Common myeloid progenitor, CD34-positive (primary cell): ENCODE measurements at regions of chr1 and their contacts with region 1.

Region 1: GRCh38 chr1:229130028-229130668 is 140.8 kb upstream of the RAB4A start:
- DNase-seq: peak; percentile 29 to 80 (median 76)
- H3K4me3 ChIP-seq: peak overlapping the region in 1 of 7 experiments; percentile 0
- H3K27ac ChIP-seq: no peak overlapping the region
- H3K4me1 ChIP-seq: peaks cover 8 to 34% (median 26%) of the 10 kb centered on the region in 4 experiments
- H3K27me3 ChIP-seq: no peaks in the 10 kb centered on the region

Region 2: GRCh38 chr1:229024528-229025130 is 105.5 kb before region 1 on chr1:
- CTCF ChIA-PET with region 1: no interaction called
- POLR2A ChIA-PET with region 1: no interaction called
- DNase-seq: peak; percentile 54 to 81 (median 80)
- H3K4me3 ChIP-seq: no peak overlapping the region
- H3K27ac ChIP-seq: no peak overlapping the region
- H3K4me1 ChIP-seq: peaks cover 13 to 66% (median 59%) of the 10 kb centered on the region in 4 experiments
- H3K27me3 ChIP-seq: no peaks in the 10 kb centered on the region

Region 3: GRCh38 chr1:229102741-229103391 is 27.3 kb before region 1 on chr1:
- CTCF ChIA-PET with region 1: no interaction called
- POLR2A ChIA-PET with region 1: no interaction called
- DNase-seq: no peak
- H3K4me3 ChIP-seq: no peak overlapping the region
- H3K27ac ChIP-seq: no peak overlapping the region
- H3K4me1 ChIP-seq: no peaks in the 10 kb centered on the region
- H3K27me3 ChIP-seq: peaks cover 0 to 2% (median 0%) of the 10 kb centered on the region in 5 experiments

Region 4: GRCh38 chr1:229148041-229148671 is 18.0 kb after region 1 on chr1:
- CTCF ChIA-PET with region 1: interaction called, 14 read pairs
- POLR2A ChIA-PET with region 1: interaction called, 4 read pairs
- DNase-seq: peak; percentile 94 to 97 (median 95)
- H3K4me3 ChIP-seq: peak overlapping the region in 2 of 7 experiments; percentile 40 to 52
- H3K27ac ChIP-seq: no peak overlapping the region
- H3K4me1 ChIP-seq: peaks cover 3 to 31% (median 19%) of the 10 kb centered on the region in 4 experiments
- H3K27me3 ChIP-seq: peaks cover 0 to 15% (median 3%) of the 10 kb centered on the region in 5 experiments

Region 5: GRCh38 chr1:229420765-229421164 is 290.6 kb after region 1 on chr1:
- CTCF ChIA-PET with region 1: no interaction called
- POLR2A ChIA-PET with region 1: no interaction called
- DNase-seq: no peak
- H3K4me3 ChIP-seq: no peak overlapping the region
- H3K27ac ChIP-seq: no peak overlapping the region
- H3K4me1 ChIP-seq: no peaks in the 10 kb centered on the region
- H3K27me3 ChIP-seq: peaks cover 0 to 29% (median 4%) of the 10 kb centered on the region in 5 experiments